CD8-positive, alpha-beta T cell (primary cell): ENCODE measurements at regions of chr12 and their contacts with region 1.

Region 1: GRCh38 chr12:9707864-9708808 is 24.8 kb downstream of the CLECL1 start:
- DNase-seq: peak; percentile 47 to 88 (median 73)
- ATAC-seq: peak; percentile 89
- H3K4me3 ChIP-seq: peak overlapping the region; percentile 5 to 21
- H3K4me3 Mint-ChIP-seq: peak overlapping the region; percentile 73
- H3K27ac ChIP-seq: peak overlapping the region; percentile 19 to 75
- H3K27ac Mint-ChIP-seq: peak overlapping the region; percentile 95
- H3K4me1 ChIP-seq: peaks cover 37% of the 10 kb centered on the region
- H3K4me1 Mint-ChIP-seq: peaks cover 62% of the 10 kb centered on the region
- H3K27me3 ChIP-seq: no peaks in the 10 kb centered on the region
- H3K27me3 Mint-ChIP-seq: no peaks in the 10 kb centered on the region
- CTCF ChIP-seq: peak; percentile 70

Region 2: GRCh38 chr12:9449181-9449580 is 259.0 kb before region 1 on chr12:
- CTCF ChIA-PET with region 1: interaction called, 3 read pairs
- POLR2A ChIA-PET with region 1: no interaction called
- intact Hi-C with region 1: loop called in 1 of 2 experiments (anchors 5 kb)
- DNase-seq: peak in 1 of 9 experiments; percentile 13
- ATAC-seq: no peak
- H3K4me3 ChIP-seq: peak overlapping the region; percentile 41 to 77
- H3K4me3 Mint-ChIP-seq: peak overlapping the region; percentile 93
- H3K27ac ChIP-seq: no peak overlapping the region
- H3K27ac Mint-ChIP-seq: peak overlapping the region; percentile 63
- H3K4me1 ChIP-seq: peaks cover 9% of the 10 kb centered on the region
- H3K4me1 Mint-ChIP-seq: peaks cover 18% of the 10 kb centered on the region
- H3K27me3 ChIP-seq: no peaks in the 10 kb centered on the region
- H3K27me3 Mint-ChIP-seq: no peaks in the 10 kb centered on the region
- CTCF ChIP-seq: no peak

Region 3: DNA sequence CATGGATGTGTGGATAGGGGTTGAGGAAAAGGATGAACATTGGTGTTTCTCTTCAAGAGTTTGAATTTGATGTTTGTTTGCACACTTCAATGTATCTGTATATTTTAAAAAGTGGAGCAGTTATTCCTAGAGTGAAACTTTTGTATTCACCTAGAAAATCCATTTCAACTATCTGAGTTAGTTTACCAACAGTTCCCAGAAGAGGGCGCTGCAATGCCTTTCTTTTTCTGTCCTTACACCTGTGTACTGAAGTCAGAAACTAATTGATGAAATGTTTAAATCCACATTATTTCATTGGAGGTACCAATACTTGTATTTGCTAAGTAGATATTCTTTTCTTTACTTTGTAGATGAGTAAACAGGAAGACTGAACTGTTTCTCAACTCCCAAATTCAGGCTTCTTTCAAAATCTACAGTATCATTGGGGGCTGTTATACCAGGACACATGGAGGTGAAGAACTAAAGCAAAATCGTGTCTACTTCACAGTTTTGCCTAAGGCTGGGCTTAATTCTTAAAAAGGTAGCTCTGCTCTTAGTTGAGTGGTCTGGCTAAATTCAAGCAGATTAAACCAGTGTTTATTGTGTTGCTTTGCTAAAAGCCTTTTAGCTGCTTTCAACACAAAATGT is 73.8 kb before region 1 on chr12:
- CTCF ChIA-PET with region 1: interaction called, 145 read pairs
- POLR2A ChIA-PET with region 1: interaction called, 9 read pairs
- intact Hi-C with region 1: loop called (anchors 1 kb)
- DNase-seq: peak; percentile 59 to 87 (median 83)
- ATAC-seq: peak; percentile 95
- H3K4me3 ChIP-seq: no peak overlapping the region
- H3K4me3 Mint-ChIP-seq: peak overlapping the region; percentile 33
- H3K27ac ChIP-seq: peak overlapping the region in 1 of 2 experiments; percentile 23
- H3K27ac Mint-ChIP-seq: peak overlapping the region; percentile 92
- H3K4me1 ChIP-seq: peaks cover 43% of the 10 kb centered on the region
- H3K4me1 Mint-ChIP-seq: peaks cover 64% of the 10 kb centered on the region
- H3K27me3 ChIP-seq: no peaks in the 10 kb centered on the region
- H3K27me3 Mint-ChIP-seq: no peaks in the 10 kb centered on the region
- CTCF ChIP-seq: peak; percentile 93

Region 4: GRCh38 chr12:9662500-9662899 is 45.6 kb before region 1 on chr12:
- CTCF ChIA-PET with region 1: interaction called, 12 read pairs
- POLR2A ChIA-PET with region 1: interaction called, 6 read pairs
- intact Hi-C with region 1: no loop called
- DNase-seq: peak in 1 of 9 experiments; percentile 38
- ATAC-seq: peak; percentile 44
- H3K4me3 ChIP-seq: no peak overlapping the region
- H3K4me3 Mint-ChIP-seq: peak overlapping the region; percentile 53
- H3K27ac ChIP-seq: peak overlapping the region in 1 of 2 experiments; percentile 52
- H3K27ac Mint-ChIP-seq: peak overlapping the region; percentile 88
- H3K4me1 ChIP-seq: peaks cover 83% of the 10 kb centered on the region
- H3K4me1 Mint-ChIP-seq: peaks cover 91% of the 10 kb centered on the region
- H3K27me3 ChIP-seq: no peaks in the 10 kb centered on the region
- H3K27me3 Mint-ChIP-seq: no peaks in the 10 kb centered on the region
- CTCF ChIP-seq: no peak

Region 5: DNA sequence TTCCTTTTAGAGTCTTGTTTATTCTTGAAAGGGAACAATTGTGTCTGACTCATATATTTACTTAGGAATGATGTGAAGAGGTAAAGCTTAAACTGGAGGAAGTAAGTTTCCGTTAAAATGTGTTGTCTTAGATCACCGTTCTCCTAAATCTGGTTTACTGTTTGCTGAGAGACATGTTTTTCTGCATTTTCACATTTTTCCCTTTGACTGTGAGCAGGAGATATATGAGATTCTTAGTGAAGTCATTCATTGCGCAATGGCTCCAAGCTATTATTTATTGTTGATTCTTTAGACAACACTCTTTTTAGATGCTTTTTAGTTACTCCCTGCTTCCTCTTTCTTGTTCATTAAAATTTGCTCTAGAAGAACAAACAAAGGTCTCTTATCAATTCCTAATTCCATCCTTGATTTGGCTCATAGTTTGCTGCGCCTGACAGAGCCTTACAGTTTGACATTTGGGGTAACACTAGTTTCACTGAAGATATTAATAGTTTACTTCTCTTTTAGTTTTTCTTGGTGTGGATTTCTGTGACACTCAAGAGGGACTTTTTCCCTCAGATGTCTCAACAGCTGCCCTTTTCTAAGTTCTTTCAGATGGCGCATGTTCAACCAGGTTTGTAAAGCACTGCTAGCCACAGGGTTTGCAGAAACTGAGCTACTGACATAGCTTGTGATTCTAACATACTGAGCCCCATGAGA is 13.4 kb after region 1 on chr12:
- CTCF ChIA-PET with region 1: interaction called, 13 read pairs
- POLR2A ChIA-PET with region 1: interaction called, 4 read pairs
- intact Hi-C with region 1: no loop called
- DNase-seq: no peak
- ATAC-seq: no peak
- H3K4me3 ChIP-seq: no peak overlapping the region
- H3K4me3 Mint-ChIP-seq: no peak overlapping the region
- H3K27ac ChIP-seq: no peak overlapping the region
- H3K27ac Mint-ChIP-seq: no peak overlapping the region
- H3K4me1 ChIP-seq: no peaks in the 10 kb centered on the region
- H3K4me1 Mint-ChIP-seq: peaks cover 6% of the 10 kb centered on the region
- H3K27me3 ChIP-seq: peaks cover 0 to 4% of the 10 kb centered on the region in 2 experiments
- H3K27me3 Mint-ChIP-seq: no peaks in the 10 kb centered on the region
- CTCF ChIP-seq: no peak